GM10248 (cell line): ENCODE measurements at regions of chr1 and their contacts with region 1.

Region 1: DNA sequence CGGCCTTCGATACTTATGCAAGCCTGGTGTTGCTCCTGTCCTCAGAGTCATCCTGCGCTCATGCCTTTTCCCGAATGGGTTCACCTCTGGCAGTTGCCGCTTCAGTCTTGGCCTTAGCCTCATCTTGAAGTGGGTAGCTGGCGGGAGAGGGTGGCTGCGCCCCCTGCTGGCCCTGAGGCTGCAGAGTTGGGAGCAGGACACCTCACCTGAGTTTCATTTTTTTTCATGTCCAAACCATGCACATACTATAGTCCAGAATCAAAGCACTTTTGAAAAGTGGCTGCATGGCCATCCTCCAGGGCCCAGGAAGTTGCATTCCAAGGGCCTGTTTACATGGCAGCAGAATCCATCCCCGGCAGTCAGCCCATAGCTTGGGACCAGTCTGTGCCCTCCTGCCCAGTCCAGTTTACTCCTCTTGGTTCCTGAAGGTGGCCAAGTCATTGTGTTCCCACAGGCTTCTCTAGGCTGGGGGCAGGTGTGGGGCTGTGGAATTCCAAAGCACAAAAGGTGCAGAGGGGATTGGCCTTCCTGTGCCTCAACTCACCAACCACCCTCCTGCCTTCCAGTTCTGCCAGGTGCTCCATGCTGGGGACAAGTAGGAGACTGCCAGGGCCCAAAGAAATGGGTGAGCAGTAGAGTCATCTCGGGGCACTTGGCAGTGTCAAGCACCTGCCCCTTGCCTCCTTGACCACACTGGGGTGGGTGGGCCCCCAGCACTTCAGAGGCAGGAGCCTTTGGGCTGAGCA is 44.0 kb downstream of the YARS1 start:
- DNase-seq: peak; percentile 89
- CTCF ChIP-seq: peak; percentile 95

Region 2: GRCh38 chr1:32521165-32521564 is 252.0 kb before region 1 on chr1:
- CTCF ChIA-PET with region 1: interaction called, 72 read pairs
- POLR2A ChIA-PET with region 1: interaction called, 4 read pairs
- DNase-seq: no peak
- CTCF ChIP-seq: no peak

Region 3: GRCh38 chr1:32716312-32717148 is 56.7 kb before region 1 on chr1:
- CTCF ChIA-PET with region 1: interaction called, 104 read pairs
- POLR2A ChIA-PET with region 1: interaction called, 3 read pairs
- DNase-seq: peak; percentile 83
- CTCF ChIP-seq: no peak

Region 4: DNA sequence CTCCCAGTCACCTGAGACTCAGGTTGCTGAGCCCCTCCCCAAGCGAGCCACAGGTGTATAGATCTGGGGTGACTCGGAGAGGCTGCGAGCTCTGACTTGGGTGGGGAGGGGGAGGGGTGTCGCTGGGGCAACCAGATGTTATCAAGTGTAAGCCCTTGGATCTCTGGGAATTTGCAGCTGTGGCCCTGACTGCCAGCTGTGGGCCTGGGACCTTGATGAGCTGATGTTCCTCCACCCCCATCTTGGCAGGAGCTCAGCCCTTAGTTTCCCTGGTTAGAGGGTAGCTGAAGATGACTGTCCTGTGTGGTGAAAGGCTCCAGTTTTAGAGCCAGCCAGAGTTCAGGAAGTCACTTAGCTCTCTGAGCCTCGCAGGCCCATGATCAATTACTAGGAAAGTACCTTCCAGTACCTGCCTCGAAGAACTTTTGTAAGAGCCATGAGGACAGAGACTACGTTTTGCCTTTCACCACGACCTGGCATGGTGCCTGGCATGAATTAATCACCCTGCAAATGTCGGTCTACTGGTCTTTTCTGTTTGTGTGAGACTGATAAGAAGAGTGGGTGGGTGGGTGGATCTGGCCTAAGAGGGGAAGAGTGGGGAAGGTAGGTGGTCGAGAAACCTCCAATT is 11.8 kb before region 1 on chr1:
- CTCF ChIA-PET with region 1: interaction called, 22 read pairs
- POLR2A ChIA-PET with region 1: interaction called, 4 read pairs
- DNase-seq: no peak
- CTCF ChIP-seq: no peak

Region 5: GRCh38 chr1:32791881-32792280 is 18.7 kb after region 1 on chr1:
- CTCF ChIA-PET with region 1: interaction called, 33 read pairs
- POLR2A ChIA-PET with region 1: no interaction called
- DNase-seq: no peak
- CTCF ChIP-seq: no peak

Region 6: DNA sequence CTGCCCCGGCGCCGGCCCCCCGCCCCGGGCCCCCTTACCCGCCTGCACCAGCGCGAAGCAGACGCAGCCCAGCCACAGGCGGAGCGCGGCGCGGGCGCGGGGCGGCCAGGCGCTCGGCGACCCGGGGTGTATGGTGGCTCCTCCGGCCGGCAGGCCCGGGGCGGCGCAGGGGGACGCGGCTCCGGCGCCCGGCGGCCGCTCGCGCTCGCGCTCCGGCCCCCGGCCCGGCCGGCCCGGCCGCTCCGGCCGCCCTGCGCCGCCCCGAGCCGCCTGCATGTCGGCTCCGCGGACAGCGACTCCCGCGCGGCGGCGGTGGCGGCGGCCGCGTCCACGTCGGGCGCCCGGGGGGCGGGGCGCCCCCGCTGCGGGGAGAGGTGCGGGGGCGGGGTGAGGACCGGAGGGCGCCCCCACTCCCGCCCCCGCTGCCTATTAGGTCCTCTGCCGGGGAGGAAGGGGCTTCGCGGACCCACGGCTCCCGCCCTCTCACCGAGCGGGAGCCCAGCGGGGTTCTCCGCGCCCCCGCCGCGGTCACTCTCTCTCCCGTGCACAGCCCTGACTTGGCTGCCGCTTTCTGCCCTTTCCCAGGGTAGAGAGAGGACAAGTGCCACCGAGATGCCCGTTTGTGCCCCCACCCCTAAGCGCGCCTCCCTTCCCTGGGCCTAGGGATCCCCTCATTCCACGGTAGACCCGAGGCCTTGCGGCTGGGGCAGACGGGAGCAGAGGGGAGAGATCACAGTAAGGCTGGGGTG is 97.6 kb after region 1 on chr1 and contains the start of gene FNDC5:
- CTCF ChIA-PET with region 1: interaction called, 13 read pairs
- POLR2A ChIA-PET with region 1: no interaction called
- DNase-seq: no peak
- CTCF ChIP-seq: no peak

Region 7: GRCh38 chr1:33036526-33037503 is 263.6 kb after region 1 on chr1 and contains the start of gene AK2:
- CTCF ChIA-PET with region 1: no interaction called
- POLR2A ChIA-PET with region 1: no interaction called
- DNase-seq: peak; percentile 98
- CTCF ChIP-seq: no peak